ENCODE measurements at regions of chr3 and their contacts with region 1.

Region 1: GRCh38 chr3:122590610-122591009 is 13.2 kb downstream of the PARP15 start:
- DNase-seq: no peak
- H3K4me3 ChIP-seq: no peak overlapping the region
- H3K27ac ChIP-seq: no peak overlapping the region
- H3K4me1 ChIP-seq: no peaks in the 10 kb centered on the region
- H3K27me3 ChIP-seq: no peaks in the 10 kb centered on the region
- CTCF ChIP-seq: no peak
- POLR2A ChIP-seq: no peak

Region 2: DNA sequence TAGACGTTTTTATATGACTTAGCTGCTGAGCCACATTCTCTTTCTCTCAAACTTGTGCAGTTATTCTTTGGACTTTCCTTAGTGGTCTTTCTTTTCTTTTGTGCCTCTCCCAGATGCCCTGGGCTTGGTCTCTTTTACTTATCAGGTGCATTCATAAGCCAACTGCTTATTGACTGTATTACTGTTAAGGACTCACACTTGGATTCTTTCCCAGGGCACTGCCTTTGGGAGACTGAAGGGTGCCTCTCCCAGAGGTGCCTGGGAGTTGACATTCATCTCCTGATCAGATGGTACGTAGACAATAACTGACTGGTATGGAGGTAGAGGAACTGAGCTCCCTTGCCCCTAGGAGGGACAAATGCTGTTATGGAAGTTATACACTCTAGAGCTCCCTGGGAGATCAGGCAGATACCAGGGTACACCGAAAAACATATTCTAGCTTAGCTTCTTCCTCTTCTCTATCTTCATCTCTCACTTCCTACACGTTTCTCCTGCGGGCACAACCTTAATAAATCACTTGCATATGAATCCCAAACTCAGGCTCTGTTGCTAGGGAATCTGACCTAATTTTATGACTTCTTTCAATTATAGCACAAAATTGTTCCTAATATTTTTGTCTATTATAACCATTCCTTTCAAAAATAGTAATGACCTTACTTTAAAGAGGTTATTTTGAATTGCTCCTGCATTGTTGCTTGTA is 11.6 kb after region 1 on chr3:
- intact Hi-C with region 1: loop called (anchors 1 kb)
- DNase-seq: no peak
- H3K4me3 ChIP-seq: no peak overlapping the region
- H3K27ac ChIP-seq: no peak overlapping the region
- H3K4me1 ChIP-seq: no peaks in the 10 kb centered on the region
- H3K27me3 ChIP-seq: no peaks in the 10 kb centered on the region
- CTCF ChIP-seq: no peak
- POLR2A ChIP-seq: no peak